ENCODE measurements at regions of chr1 and their contacts with region 1.

Region 1: GRCh38 chr1:43073490-43074230 is 98.4 kb downstream of the EBNA1BP2 start:
- DNase-seq: peak; percentile 81
- ATAC-seq: peak; percentile 96
- H3K4me3 ChIP-seq: no peak overlapping the region
- H3K27ac ChIP-seq: no peak overlapping the region
- H3K4me1 ChIP-seq: no peaks in the 10 kb centered on the region
- H3K27me3 ChIP-seq: no peaks in the 10 kb centered on the region
- CTCF ChIP-seq: peak; percentile 86

Region 2: DNA sequence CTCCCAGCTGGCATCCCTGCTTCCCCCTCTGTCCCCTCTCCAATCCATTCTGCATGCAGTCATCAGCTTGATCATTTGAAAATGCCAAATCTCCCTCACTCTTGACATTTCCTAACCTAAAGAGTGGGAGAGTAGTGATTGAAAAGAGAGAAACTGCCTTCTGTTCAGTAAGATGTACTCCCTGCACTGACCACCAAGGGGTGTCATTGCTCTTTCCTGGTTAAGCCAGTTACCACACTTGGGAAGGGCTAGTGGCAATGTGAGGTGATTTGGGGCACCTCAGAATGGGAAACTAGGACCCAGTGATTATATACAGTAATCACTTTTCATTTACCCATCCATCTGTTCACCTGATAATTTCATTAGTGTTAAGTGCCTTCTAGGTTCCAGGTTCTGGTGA is 295.8 kb before region 1 on chr1:
- CTCF ChIA-PET with region 1: interaction called, 13 read pairs
- POLR2A ChIA-PET with region 1: no interaction called
- intact Hi-C with region 1: loop called (anchors 1 kb)
- DNase-seq: peak; percentile 48
- ATAC-seq: peak; percentile 63
- H3K4me3 ChIP-seq: no peak overlapping the region
- H3K27ac ChIP-seq: no peak overlapping the region
- H3K4me1 ChIP-seq: no peaks in the 10 kb centered on the region
- H3K27me3 ChIP-seq: no peaks in the 10 kb centered on the region
- CTCF ChIP-seq: peak; percentile 83

Region 3: GRCh38 chr1:42886800-42887199 is 186.9 kb before region 1 on chr1:
- CTCF ChIA-PET with region 1: no interaction called
- POLR2A ChIA-PET with region 1: no interaction called
- intact Hi-C with region 1: no loop called
- DNase-seq: no peak
- ATAC-seq: no peak
- H3K4me3 ChIP-seq: no peak overlapping the region
- H3K27ac ChIP-seq: no peak overlapping the region
- H3K4me1 ChIP-seq: no peaks in the 10 kb centered on the region
- H3K27me3 ChIP-seq: no peaks in the 10 kb centered on the region
- CTCF ChIP-seq: no peak

Region 4: DNA sequence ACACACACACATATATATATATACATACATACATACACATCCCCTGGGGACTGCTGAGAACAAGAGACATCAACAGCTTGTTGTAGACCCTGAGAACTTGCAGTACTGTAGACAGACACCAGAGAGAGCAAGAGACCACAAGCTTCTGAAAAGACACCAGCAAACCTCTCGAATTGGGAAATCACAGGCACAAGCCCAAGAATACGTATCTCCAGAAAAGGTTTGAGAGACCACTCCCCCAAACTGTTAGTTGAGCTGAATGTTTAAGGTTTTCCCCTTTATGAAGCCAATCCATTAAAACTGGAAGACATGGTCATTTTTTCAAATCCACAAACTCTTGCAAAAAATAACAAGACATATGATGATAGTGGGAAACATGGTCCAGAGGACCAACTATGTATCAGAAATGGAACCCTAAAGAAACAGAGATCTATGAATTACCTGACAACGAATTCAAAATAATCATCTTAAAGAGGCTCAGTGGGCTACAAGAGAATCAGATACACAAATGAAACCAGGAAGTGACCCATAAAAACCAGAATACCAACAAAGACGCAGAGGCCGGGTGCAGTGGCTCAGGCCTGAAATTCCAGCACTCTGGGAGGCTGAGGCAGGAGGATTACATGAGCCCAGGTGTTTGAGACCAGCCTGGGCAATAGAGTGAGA is 160.1 kb before region 1 on chr1:
- CTCF ChIA-PET with region 1: interaction called, 78 read pairs
- POLR2A ChIA-PET with region 1: interaction called, 6 read pairs
- intact Hi-C with region 1: loop called (anchors 1 kb)
- DNase-seq: peak; percentile 86
- ATAC-seq: peak; percentile 73
- H3K4me3 ChIP-seq: no peak overlapping the region
- H3K27ac ChIP-seq: no peak overlapping the region
- H3K4me1 ChIP-seq: no peaks in the 10 kb centered on the region
- H3K27me3 ChIP-seq: no peaks in the 10 kb centered on the region
- CTCF ChIP-seq: peak; percentile 75

Region 5: DNA sequence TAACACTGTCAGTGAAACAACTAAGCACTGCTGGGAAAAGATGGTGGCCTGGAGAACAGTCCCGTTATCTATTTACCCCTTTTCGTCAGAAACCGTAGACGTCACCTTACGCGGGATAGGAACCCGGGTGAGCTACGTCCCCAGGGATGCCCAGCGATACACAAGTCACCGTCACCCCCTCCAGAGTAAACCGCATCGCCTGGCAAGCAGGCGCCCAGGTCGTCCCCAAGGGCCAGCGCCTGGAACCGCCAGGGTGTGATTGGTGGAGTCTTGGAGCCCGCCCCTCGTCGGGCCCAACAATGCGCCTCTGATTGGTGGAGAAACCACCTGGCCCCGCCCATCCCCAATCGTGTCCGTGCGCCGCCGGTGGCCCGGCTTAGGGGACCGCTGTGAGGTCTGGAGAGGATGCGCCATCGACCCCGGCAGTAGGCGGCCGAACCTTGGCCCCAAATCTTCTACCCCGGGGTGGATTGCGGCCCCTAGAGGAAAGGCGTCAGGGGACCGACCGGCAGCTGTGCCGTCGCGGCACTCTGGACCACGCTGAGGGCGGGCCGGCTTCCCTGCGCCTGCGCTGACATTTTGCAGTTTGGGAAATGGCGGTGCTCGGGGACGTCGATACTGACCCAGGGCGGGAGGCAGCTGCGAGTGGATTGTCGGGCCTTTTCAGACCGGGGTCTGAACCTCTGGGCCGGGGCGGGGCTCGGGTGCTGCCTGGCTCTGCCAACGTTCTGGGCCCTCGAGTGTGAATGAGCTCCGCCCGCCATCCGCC is 149.4 kb before region 1 on chr1:
- CTCF ChIA-PET with region 1: interaction called, 63 read pairs
- POLR2A ChIA-PET with region 1: interaction called, 4 read pairs
- intact Hi-C with region 1: loop called (anchors 1 kb)
- DNase-seq: peak; percentile 92
- ATAC-seq: peak; percentile 87
- H3K4me3 ChIP-seq: peak overlapping the region; percentile 79
- H3K27ac ChIP-seq: peak overlapping the region; percentile 72
- H3K4me1 ChIP-seq: peaks cover 25% of the 10 kb centered on the region
- H3K27me3 ChIP-seq: no peaks in the 10 kb centered on the region
- CTCF ChIP-seq: no peak; the same call in 1 of the 2 replicates

Region 6: DNA sequence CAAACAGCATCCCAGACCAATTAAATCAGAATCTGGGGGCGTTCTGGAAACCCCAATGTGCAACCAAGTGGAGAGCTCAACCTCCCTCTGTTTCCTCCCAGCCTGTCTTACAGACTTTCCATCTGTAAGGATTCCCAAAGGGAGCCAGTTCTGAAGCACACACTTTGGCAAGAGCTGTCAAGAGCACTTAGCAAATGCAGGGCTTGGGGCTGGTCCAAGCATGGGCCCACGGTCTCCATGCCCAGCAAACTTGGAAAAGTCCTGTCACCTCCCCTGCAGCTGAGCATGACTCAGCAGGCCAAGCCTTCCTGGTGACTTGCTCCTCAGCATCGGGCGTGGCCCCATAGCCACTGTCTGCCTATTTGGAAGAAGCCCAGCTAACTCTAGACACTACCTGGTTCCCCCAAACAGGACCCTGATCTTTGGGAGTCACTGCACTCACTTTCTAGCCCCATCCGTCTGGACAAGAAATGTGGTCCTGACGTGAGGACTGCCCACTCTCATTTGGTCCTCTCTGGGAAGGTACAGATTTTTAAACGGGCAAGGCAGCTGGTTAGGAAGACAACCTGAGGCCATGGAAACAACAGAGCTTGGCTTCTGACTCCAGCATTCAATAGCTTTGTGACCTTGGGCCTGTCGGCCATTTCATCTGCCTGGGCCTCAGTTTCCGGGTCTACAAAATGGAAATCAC is 131.9 kb before region 1 on chr1:
- CTCF ChIA-PET with region 1: interaction called, 13 read pairs
- POLR2A ChIA-PET with region 1: interaction called, 4 read pairs
- intact Hi-C with region 1: no loop called
- DNase-seq: peak; percentile 97
- ATAC-seq: peak; percentile 36
- H3K4me3 ChIP-seq: peak overlapping the region; percentile 13; the same call in 1 of the 2 replicates
- H3K27ac ChIP-seq: peak overlapping the region; percentile 99
- H3K4me1 ChIP-seq: peaks cover 100% of the 10 kb centered on the region
- H3K27me3 ChIP-seq: no peaks in the 10 kb centered on the region
- CTCF ChIP-seq: no peak

Region 7: GRCh38 chr1:42958488-42959319 is 115.0 kb before region 1 on chr1 and contains the start of gene SLC2A1:
- CTCF ChIA-PET with region 1: interaction called, 6 read pairs
- POLR2A ChIA-PET with region 1: no interaction called
- intact Hi-C with region 1: loop called (anchors 2 kb)
- DNase-seq: peak; percentile 94
- ATAC-seq: peak; percentile 77
- H3K4me3 ChIP-seq: peak within 1 kb of the TSS; percentile 99
- H3K27ac ChIP-seq: peak within 1 kb of the TSS; percentile 49
- H3K4me1 ChIP-seq: peaks cover 70% of the 10 kb centered on the region
- H3K27me3 ChIP-seq: no peaks in the 10 kb centered on the region
- CTCF ChIP-seq: no peak
- total RNA-seq, gene SLC2A1: 245 and 264 TPM in 2 replicates

Region 8: DNA sequence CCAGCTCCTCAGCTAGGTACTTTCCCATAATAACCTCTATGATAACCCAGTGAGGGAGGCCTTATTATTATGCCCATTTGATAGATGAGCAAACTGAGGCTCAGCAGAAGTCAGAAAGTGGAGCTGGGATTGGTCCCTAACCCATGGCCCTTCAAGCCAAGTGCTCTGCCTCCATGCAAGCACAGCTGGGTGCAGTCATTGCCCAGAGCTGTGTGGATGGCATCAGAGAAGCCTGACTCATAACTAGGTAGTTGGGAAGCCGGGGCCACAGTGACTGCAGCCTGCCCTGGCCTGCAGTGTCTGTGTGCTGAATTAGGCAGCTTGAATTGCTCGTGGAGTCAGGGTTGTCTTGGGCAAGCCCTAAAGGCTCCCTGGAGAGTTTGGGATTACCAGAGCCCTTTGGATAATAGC is 25.1 kb before region 1 on chr1:
- CTCF ChIA-PET with region 1: no interaction called
- POLR2A ChIA-PET with region 1: no interaction called
- intact Hi-C with region 1: no loop called
- DNase-seq: no peak
- ATAC-seq: peak; percentile 53
- H3K4me3 ChIP-seq: no peak overlapping the region
- H3K27ac ChIP-seq: no peak overlapping the region
- H3K4me1 ChIP-seq: no peaks in the 10 kb centered on the region
- H3K27me3 ChIP-seq: no peaks in the 10 kb centered on the region
- CTCF ChIP-seq: no peak

Region 9: GRCh38 chr1:43165162-43165561 is 91.5 kb after region 1 on chr1:
- CTCF ChIA-PET with region 1: no interaction called
- POLR2A ChIA-PET with region 1: no interaction called
- intact Hi-C with region 1: loop called (anchors 10 kb)
- DNase-seq: no peak
- ATAC-seq: no peak
- H3K4me3 ChIP-seq: no peak overlapping the region
- H3K27ac ChIP-seq: no peak overlapping the region
- H3K4me1 ChIP-seq: peaks cover 3% of the 10 kb centered on the region
- H3K27me3 ChIP-seq: no peaks in the 10 kb centered on the region
- CTCF ChIP-seq: no peak

Measured in PC-3 (cell line).